Dendritic cell treated with granulocyte-macrophage colony-stimulating factor and Interleukin-4, amounts not matched to agents 40 ng/mL and 50 ng/mL, for 4 days (primary cell): ENCODE measurements at regions of chr16 and their contacts with region 1.

Region 1: GRCh38 chr16:89473791-89474414 is 16.5 kb downstream of the ANKRD11 start:
- H3K4me3 Mint-ChIP-seq: peak overlapping the region; percentile 14
- H3K27ac Mint-ChIP-seq: peak overlapping the region; percentile 60
- H3K4me1 Mint-ChIP-seq: peaks cover 95% of the 10 kb centered on the region
- H3K27me3 Mint-ChIP-seq: no peaks in the 10 kb centered on the region

Region 2: DNA sequence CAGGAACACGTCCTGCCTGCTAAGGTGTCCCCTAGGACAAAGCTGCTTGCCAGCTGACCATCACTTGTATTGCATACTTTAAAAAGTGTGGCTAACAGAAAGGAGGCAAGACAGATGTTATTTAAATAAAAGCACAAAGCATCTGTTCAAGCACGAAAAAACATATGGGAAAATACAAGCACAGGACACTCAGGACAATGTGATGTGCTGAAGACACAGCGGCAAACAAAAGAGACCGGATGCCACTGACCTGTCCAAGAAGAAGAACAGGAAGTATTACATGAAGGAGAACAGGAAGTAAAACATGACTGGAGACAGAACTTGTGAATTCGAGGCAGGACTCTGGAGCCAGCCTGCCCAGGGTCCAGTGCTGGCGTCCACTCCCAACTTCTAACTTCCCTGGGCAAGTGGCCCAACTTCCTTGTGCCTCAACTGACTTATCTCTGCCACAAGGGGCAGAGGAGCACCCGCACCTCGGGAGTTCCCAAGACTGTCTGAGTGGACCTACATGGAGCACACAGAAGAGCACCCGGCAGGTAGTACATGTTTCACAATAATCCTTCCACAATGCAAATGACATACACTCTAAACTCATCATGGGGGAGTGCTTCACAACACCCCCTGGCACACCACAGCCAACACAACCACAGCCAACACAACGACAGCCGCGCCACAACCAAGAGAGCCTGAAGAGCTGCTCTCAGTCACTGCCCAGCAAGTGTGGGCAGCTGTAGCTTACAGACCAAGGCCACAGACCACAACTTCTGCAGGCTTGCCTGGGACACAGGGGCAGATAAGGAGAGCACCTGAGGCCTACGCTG is 20.2 kb before region 1 on chr16:
- intact Hi-C with region 1: no loop called
- H3K4me3 Mint-ChIP-seq: peak overlapping the region; percentile 45
- H3K27ac Mint-ChIP-seq: peak overlapping the region; percentile 79
- H3K4me1 Mint-ChIP-seq: peaks cover 54% of the 10 kb centered on the region
- H3K27me3 Mint-ChIP-seq: no peaks in the 10 kb centered on the region

Region 3: DNA sequence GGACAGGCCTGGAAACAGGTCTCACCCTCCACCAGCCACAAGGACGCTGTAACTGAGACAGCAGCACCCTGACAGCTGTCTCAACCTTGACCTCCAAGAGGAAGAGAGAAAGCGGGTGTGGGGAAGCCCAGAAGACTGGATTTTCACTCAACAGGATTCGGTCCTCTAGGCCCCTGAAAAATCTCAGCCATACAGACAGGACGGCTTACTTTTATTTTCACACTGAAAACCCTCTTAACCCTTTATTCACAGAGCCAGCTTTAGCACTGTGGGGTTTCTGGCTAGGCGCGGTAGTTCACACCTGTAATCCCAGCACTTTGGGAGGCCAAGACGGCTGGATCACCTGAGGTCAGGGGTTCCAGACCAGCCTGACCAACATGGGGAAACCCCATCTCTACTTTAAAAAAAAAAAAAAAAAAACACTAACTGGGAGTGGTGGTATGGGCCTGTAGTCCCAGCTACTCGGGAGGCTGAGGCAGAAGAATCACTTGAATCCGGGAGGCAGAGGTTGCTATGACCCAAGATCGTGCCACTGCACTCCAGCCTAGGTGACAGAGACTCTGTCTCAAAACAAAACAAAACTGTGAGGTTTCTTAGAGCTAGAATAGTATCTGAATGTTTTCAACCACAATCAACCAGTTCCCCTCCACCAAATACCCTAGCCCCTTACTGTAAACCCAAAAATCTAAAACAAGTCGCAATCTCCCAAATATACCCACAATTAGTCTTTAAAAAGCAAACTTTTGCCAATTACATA is 11.2 kb after region 1 on chr16:
- intact Hi-C with region 1: loop called (anchors 2 kb)
- H3K4me3 Mint-ChIP-seq: no peak overlapping the region
- H3K27ac Mint-ChIP-seq: peak overlapping the region; percentile 36
- H3K4me1 Mint-ChIP-seq: peaks cover 87% of the 10 kb centered on the region
- H3K27me3 Mint-ChIP-seq: no peaks in the 10 kb centered on the region

Region 4: GRCh38 chr16:89495121-89495520 is 21.2 kb after region 1 on chr16:
- intact Hi-C with region 1: no loop called
- H3K4me3 Mint-ChIP-seq: no peak overlapping the region
- H3K27ac Mint-ChIP-seq: peak overlapping the region; percentile 63
- H3K4me1 Mint-ChIP-seq: peaks cover 43% of the 10 kb centered on the region
- H3K27me3 Mint-ChIP-seq: no peaks in the 10 kb centered on the region

Region 5: GRCh38 chr16:89586853-89587252 is 113.0 kb after region 1 on chr16:
- intact Hi-C with region 1: no loop called
- H3K4me3 Mint-ChIP-seq: no peak overlapping the region
- H3K27ac Mint-ChIP-seq: no peak overlapping the region
- H3K4me1 Mint-ChIP-seq: no peaks in the 10 kb centered on the region
- H3K27me3 Mint-ChIP-seq: no peaks in the 10 kb centered on the region

Region 6: GRCh38 chr16:89785523-89786155 is 311.7 kb after region 1 on chr16:
- intact Hi-C with region 1: no loop called
- H3K4me3 Mint-ChIP-seq: no peak overlapping the region
- H3K27ac Mint-ChIP-seq: no peak overlapping the region
- H3K4me1 Mint-ChIP-seq: no peaks in the 10 kb centered on the region
- H3K27me3 Mint-ChIP-seq: no peaks in the 10 kb centered on the region